Activated CD4-positive, alpha-beta T cell treated with anti-CD3 and anti-CD28 coated beads for 36 hours (primary cell): ENCODE measurements at regions of chr7 and their contacts with region 1.

Region 1: GRCh38 chr7:21338728-21339164 is 89.1 kb upstream of the SP4 start:
- DNase-seq: peak; percentile 76
- ATAC-seq: peak; percentile 95
- H3K4me3 Mint-ChIP-seq: peak overlapping the region; percentile 21
- H3K27ac Mint-ChIP-seq: peak overlapping the region; percentile 95
- H3K4me1 Mint-ChIP-seq: peaks cover 32% of the 10 kb centered on the region
- H3K27me3 Mint-ChIP-seq: peaks cover 4% of the 10 kb centered on the region

Region 2: DNA sequence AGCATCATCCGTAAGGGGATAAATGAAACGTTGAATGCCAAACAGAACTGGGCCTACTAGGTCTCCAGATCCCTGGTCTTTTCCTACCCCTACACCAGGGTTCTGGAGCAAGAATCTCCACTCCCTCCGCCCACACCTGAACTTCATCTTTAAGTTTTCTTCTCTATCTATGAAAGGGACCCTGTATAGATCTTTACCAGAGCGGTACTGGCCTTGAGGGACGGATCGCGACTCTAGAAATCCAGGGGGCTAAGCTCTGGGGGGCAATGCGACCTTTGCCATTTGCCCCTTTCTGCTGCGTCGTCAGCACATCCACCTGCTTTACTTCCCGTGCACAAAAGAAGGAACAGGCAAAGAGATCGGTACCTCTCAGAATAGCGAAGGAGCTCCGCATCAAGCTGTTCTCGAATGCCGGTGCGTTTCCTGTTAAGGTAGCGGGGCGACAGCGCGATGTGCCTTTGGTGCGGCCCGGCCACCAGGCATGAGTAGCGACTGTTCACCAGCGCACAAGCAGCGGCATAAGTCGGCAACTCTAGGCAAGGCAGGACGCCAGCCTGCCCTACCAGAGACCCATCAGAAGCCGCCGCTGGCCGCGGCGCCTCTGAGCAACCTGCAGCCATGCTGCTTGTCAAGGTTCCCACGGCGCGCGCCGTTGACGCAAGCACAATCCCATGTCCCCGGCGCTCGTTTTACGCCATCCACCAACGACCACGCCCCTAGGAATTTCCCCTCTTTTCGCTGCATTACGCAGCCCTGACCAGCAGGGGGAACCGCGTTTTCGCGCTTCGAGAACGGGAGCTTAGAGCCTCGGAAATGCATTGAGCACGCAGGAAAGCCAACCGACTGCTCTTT is 1630.1 kb before region 1 on chr7 and contains the start of gene POLR1F:
- CTCF ChIA-PET with region 1: no interaction called
- POLR2A ChIA-PET with region 1: no interaction called
- intact Hi-C with region 1: loop called in 1 of 2 experiments (anchors 5 kb)
- DNase-seq: peak; percentile 96
- ATAC-seq: peak; percentile 96
- H3K4me3 Mint-ChIP-seq: peak within 1 kb of the TSS; percentile 89
- H3K27ac Mint-ChIP-seq: peak within 1 kb of the TSS; percentile 90
- H3K4me1 Mint-ChIP-seq: peaks cover 41% of the 10 kb centered on the region
- H3K27me3 Mint-ChIP-seq: no peaks in the 10 kb centered on the region
- total RNA-seq, gene POLR1F: 25.8 to 32.2 TPM

Region 3: GRCh38 chr7:21365866-21366624 is 27.3 kb after region 1 on chr7:
- CTCF ChIA-PET with region 1: no interaction called
- POLR2A ChIA-PET with region 1: interaction called, 5 read pairs
- intact Hi-C with region 1: loop called in 1 of 2 experiments (anchors 2 kb)
- DNase-seq: no peak
- ATAC-seq: no peak
- H3K4me3 Mint-ChIP-seq: no peak overlapping the region
- H3K27ac Mint-ChIP-seq: peak overlapping the region; percentile 47
- H3K4me1 Mint-ChIP-seq: peaks cover 43% of the 10 kb centered on the region
- H3K27me3 Mint-ChIP-seq: peaks cover 7% of the 10 kb centered on the region

Region 4: GRCh38 chr7:21461282-21461681 is 122.5 kb after region 1 on chr7:
- CTCF ChIA-PET with region 1: no interaction called
- POLR2A ChIA-PET with region 1: no interaction called
- intact Hi-C with region 1: no loop called
- DNase-seq: no peak
- ATAC-seq: no peak
- H3K4me3 Mint-ChIP-seq: no peak overlapping the region
- H3K27ac Mint-ChIP-seq: no peak overlapping the region
- H3K4me1 Mint-ChIP-seq: peaks cover 23% of the 10 kb centered on the region
- H3K27me3 Mint-ChIP-seq: no peaks in the 10 kb centered on the region